Naive thymus-derived CD4-positive, alpha-beta T cell (primary cell): ENCODE measurements at regions of chr19 and their contacts with region 1.

Region 1: GRCh38 chr19:10269333-10270179 is 1.4 kb upstream of the ICAM1 start:
- DNase-seq: peak; percentile 69 to 92 (median 85)
- ATAC-seq: peak; percentile 68
- H3K4me3 ChIP-seq: peak overlapping the region; percentile 78
- H3K4me3 Mint-ChIP-seq: peak overlapping the region; percentile 80 to 88 (median 86)
- H3K27ac ChIP-seq: peak overlapping the region; percentile 75
- H3K27ac Mint-ChIP-seq: peak overlapping the region; percentile 79 to 96 (median 88)
- H3K4me1 ChIP-seq: peaks cover 7 to 13% of the 10 kb centered on the region in 2 donors
- H3K4me1 Mint-ChIP-seq: peaks cover 8 to 39% (median 23%) of the 10 kb centered on the region in 7 donors
- H3K27me3 ChIP-seq: no peaks in the 10 kb centered on the region
- H3K27me3 Mint-ChIP-seq: no peaks in the 10 kb centered on the region

Region 2: DNA sequence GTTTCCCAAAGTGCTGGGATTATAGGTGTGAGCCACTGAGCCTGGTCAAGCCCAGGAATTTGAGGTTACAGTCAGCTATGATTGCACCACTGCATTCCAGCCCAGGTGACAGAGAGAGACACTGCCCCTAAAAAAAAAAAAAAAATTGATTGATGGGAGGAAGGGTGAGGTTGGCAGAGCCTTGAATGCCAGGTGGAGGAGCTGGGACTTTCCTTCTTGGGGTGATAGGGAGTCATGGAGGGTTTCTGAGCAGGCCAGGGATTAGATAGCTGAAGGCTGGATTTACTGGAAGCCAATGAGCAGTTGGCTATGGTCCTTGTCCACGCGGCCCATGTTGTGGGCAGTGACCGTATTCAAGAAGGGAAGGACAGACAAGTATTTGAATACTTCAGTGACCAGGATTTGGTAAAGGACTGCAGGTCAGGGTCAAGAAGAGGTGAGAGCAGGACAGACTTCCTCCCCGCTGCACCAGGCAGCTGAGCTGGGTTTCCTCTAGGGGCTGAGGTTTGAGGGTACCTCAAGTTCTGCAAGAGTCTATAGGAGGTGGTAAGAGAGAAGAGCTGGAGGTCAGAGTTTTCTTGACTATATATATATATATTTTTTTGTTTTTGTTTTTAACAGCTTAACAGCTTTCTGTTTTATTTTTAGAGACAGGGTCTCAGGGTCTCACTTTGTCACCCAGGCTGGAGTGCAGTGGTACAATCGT is 10.3 kb after region 1 on chr19:
- CTCF ChIA-PET with region 1: interaction called, 14 read pairs
- POLR2A ChIA-PET with region 1: no interaction called
- intact Hi-C with region 1: no loop called
- DNase-seq: no peak
- ATAC-seq: no peak
- H3K4me3 ChIP-seq: no peak overlapping the region
- H3K4me3 Mint-ChIP-seq: no peak overlapping the region
- H3K27ac ChIP-seq: no peak overlapping the region
- H3K27ac Mint-ChIP-seq: peak overlapping the region in 4 of 9 donors; percentile 3 to 86 (median 32)
- H3K4me1 ChIP-seq: peaks cover 0 to 3% of the 10 kb centered on the region in 2 donors
- H3K4me1 Mint-ChIP-seq: peaks cover 4 to 28% (median 8%) of the 10 kb centered on the region in 7 donors
- H3K27me3 ChIP-seq: no peaks in the 10 kb centered on the region
- H3K27me3 Mint-ChIP-seq: no peaks in the 10 kb centered on the region

Region 3: DNA sequence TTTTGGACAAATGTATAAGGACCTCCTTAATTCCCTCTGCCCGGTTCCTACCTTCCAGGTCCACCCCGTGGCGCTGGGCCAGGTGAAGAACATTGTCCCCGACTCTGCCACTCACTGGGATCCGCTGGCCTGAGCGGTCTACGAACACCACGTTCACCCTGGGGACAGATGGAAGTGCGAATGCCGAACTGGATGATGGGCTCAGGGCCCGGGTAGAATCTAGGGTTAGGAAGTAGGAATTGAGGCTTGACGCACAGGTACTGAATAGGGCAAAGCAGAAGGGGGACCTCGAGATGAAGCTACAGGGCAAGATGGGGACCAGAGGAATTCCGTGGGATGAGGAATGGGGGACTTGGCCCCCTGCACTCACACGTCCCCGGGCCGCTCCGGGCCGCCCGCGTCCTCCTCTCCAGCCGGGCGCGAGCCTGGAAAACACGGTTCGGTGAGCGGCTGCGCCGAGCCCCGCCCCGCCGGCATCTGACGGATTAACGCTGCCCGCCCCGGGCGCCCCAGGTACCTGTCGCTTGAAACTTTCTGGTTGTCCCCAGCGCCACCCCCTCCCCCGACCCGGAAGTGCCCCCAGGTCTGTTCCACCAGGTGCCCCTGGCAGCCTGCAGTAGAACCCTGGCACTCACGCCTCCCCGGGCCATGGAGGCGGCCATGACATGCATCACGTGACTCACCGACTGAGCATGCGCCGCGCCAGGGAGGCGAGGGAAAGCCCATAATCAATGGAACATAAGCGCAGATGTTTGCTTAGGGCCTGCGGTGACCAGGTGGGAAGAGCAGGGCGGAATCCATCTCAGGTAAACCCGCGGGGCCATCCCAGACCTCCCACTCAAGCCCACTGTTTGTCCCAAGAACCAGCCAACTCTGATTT is 46.0 kb after region 1 on chr19 and contains the start of gene FDX2:
- CTCF ChIA-PET with region 1: interaction called, 4 read pairs
- POLR2A ChIA-PET with region 1: interaction called, 5 read pairs
- intact Hi-C with region 1: loop called in 1 of 2 experiments (anchors 1 kb)
- DNase-seq: peak; percentile 77 to 94 (median 86)
- ATAC-seq: peak; percentile 92
- H3K4me3 ChIP-seq: peak within 1 kb of the TSS; percentile 86
- H3K4me3 Mint-ChIP-seq: peak within 1 kb of the TSS; percentile 87 to 94 (median 90)
- H3K27ac ChIP-seq: peak within 1 kb of the TSS; percentile 70
- H3K27ac Mint-ChIP-seq: peak within 1 kb of the TSS; percentile 35 to 95 (median 86)
- H3K4me1 ChIP-seq: peaks cover 6 to 13% of the 10 kb centered on the region in 2 donors
- H3K4me1 Mint-ChIP-seq: peaks cover 13 to 23% (median 16%) of the 10 kb centered on the region in 7 donors
- H3K27me3 ChIP-seq: no peaks in the 10 kb centered on the region
- H3K27me3 Mint-ChIP-seq: no peaks in the 10 kb centered on the region
- total RNA-seq, gene FDX2: 5.7 to 10.5 (median 9.3) TPM

Region 4: GRCh38 chr19:10346509-10346908 is 77.0 kb after region 1 on chr19:
- CTCF ChIA-PET with region 1: no interaction called
- POLR2A ChIA-PET with region 1: no interaction called
- intact Hi-C with region 1: no loop called
- DNase-seq: no peak
- ATAC-seq: peak; percentile 88
- H3K4me3 ChIP-seq: no peak overlapping the region
- H3K4me3 Mint-ChIP-seq: no peak overlapping the region
- H3K27ac ChIP-seq: no peak overlapping the region
- H3K27ac Mint-ChIP-seq: no peak overlapping the region
- H3K4me1 ChIP-seq: no peaks in the 10 kb centered on the region
- H3K4me1 Mint-ChIP-seq: no peaks in the 10 kb centered on the region
- H3K27me3 ChIP-seq: no peaks in the 10 kb centered on the region
- H3K27me3 Mint-ChIP-seq: no peaks in the 10 kb centered on the region

Region 5: DNA sequence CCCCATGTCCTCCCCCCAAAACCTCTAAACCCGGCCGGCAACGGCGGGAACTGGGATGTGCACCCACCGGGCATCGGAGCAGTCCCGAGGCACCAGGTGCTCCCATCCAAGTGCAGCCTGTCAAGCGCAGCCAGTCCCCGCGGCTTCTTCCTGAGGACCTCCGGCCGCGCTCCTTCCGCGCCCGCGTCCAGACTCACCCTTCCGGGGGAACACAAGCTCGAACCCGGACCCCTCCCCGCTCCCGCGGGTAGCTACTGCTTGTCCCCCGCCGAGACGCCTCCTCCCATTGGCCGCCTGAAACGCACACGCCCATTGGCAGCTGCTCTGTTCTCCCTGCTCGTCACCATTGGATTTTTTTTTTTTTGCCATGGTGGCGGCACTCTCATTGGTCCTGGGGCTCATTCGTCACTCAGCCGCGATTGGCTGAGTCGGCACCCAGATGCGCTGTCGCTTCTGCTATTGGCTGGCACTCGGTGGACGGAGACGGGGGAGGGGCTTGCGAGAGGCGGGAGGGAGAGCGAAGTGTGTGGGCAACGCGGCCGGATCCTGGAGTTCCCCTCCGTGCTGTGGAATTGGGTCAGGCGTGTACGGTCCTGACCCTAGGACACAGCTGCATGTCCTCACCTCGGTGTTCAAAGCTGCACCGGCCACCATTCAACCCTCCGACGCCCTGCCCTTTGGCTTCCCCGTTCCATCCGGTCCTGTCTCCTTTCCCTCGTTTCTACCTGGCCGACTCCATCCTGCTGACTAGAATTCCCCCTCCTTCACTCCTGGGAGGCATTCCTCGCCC is 111.0 kb after region 1 on chr19 and contains the start of gene TYK2:
- CTCF ChIA-PET with region 1: interaction called, 146 read pairs
- POLR2A ChIA-PET with region 1: interaction called, 14 read pairs
- intact Hi-C with region 1: loop called (anchors 2 kb)
- DNase-seq: peak; percentile 94 to 99 (median 97)
- ATAC-seq: peak; percentile 98
- H3K4me3 ChIP-seq: peak within 1 kb of the TSS; percentile 94
- H3K4me3 Mint-ChIP-seq: peak within 1 kb of the TSS; percentile 93 to 99 (median 94)
- H3K27ac ChIP-seq: peak within 1 kb of the TSS; percentile 84
- H3K27ac Mint-ChIP-seq: peak within 1 kb of the TSS; percentile 88 to 97 (median 93)
- H3K4me1 ChIP-seq: peaks cover 5 to 10% of the 10 kb centered on the region in 2 donors
- H3K4me1 Mint-ChIP-seq: peaks cover 14 to 34% (median 23%) of the 10 kb centered on the region in 7 donors
- H3K27me3 ChIP-seq: no peaks in the 10 kb centered on the region
- H3K27me3 Mint-ChIP-seq: peaks cover 0 to 3% (median 0%) of the 10 kb centered on the region in 5 donors
- total RNA-seq, gene TYK2: 224 to 346 (median 284) TPM

Region 6: DNA sequence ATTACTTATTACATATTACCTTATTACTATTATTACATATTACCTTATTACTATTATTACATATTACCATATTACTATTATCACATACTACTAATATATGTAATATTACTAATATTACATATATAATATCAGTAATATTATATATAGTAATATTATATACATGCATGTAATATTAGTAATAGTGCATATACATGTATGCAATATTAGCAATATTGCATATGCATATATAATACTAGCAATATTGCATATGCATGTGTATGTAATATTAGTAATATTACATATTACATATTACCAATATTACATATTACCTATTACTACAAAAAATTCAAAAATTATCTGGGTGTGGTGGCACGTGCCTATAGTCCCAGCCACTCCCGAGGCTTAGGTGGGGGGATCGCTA is 173.1 kb after region 1 on chr19:
- CTCF ChIA-PET with region 1: no interaction called
- POLR2A ChIA-PET with region 1: no interaction called
- intact Hi-C with region 1: no loop called
- DNase-seq: no peak
- ATAC-seq: no peak
- H3K4me3 ChIP-seq: no peak overlapping the region
- H3K4me3 Mint-ChIP-seq: no peak overlapping the region
- H3K27ac ChIP-seq: no peak overlapping the region
- H3K27ac Mint-ChIP-seq: no peak overlapping the region
- H3K4me1 ChIP-seq: no peaks in the 10 kb centered on the region
- H3K4me1 Mint-ChIP-seq: peaks cover 0 to 5% (median 0%) of the 10 kb centered on the region in 7 donors
- H3K27me3 ChIP-seq: no peaks in the 10 kb centered on the region
- H3K27me3 Mint-ChIP-seq: no peaks in the 10 kb centered on the region